Activated CD4-positive, alpha-beta memory T cell treated with anti-CD3 and anti-CD28 coated beads for 36 hours (primary cell): ENCODE measurements at regions of chr19 and their contacts with region 1.

Region 1: GRCh38 chr19:9140159-9140874 is at the start of gene ZNF317:
- DNase-seq: peak; percentile 93
- H3K4me3 Mint-ChIP-seq: peak within 1 kb of the TSS; percentile 98
- H3K27ac Mint-ChIP-seq: peak within 1 kb of the TSS; percentile 94
- H3K4me1 Mint-ChIP-seq: peaks cover 36% of the 10 kb centered on the region
- H3K27me3 Mint-ChIP-seq: no peaks in the 10 kb centered on the region
- total RNA-seq, gene ZNF317: 31.8 to 31.9 TPM

Region 2: GRCh38 chr19:8832132-8833021 is 307.9 kb before region 1 on chr19 and contains the starts of genes MBD3L1 and ZNF558:
- CTCF ChIA-PET with region 1: no interaction called
- POLR2A ChIA-PET with region 1: no interaction called
- intact Hi-C with region 1: loop called (anchors 2 kb)
- DNase-seq: peak; percentile 99
- H3K4me3 Mint-ChIP-seq: peak within 1 kb of the TSS; percentile 81
- H3K27ac Mint-ChIP-seq: peak within 1 kb of the TSS; percentile 94
- H3K4me1 Mint-ChIP-seq: peaks cover 22% of the 10 kb centered on the region
- H3K27me3 Mint-ChIP-seq: no peaks in the 10 kb centered on the region
- total RNA-seq, gene MBD3L1: not detected
- total RNA-seq, gene ZNF558: 27.3 to 30.3 TPM

Region 3: DNA sequence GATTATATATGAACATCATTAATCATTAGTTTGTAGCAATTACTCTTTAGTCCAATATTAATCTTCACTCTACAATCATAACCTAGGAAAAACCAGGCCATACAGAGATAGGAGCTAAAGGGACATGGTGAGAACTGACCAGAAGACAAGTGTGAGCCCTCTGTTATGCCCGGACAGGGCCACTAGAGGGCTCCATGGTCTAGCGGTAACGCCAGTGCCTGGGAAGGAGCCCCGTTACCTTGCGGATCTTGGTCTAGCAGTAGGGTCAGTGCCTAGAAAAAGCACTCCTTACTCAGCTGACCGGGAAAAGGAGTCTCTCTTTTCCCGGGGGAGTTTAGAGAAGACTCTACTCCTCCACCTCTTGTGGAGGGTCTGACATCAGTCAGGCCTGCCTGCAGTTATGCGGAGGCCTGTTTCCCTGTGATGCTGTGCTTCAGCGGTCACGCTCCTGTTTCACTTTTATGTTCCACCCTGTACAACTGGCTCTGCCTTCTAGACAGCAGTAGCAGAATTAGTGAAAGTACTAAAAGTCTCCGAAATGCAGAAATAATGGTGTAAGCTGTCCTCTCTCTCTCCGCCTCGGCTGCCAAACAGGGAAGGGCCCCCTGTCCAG is 65.3 kb after region 1 on chr19:
- CTCF ChIA-PET with region 1: no interaction called
- POLR2A ChIA-PET with region 1: no interaction called
- intact Hi-C with region 1: loop called (anchors 2 kb)
- DNase-seq: peak; percentile 76
- H3K4me3 Mint-ChIP-seq: peak overlapping the region; percentile 23
- H3K27ac Mint-ChIP-seq: no peak overlapping the region
- H3K4me1 Mint-ChIP-seq: peaks cover 2% of the 10 kb centered on the region
- H3K27me3 Mint-ChIP-seq: peaks cover 4% of the 10 kb centered on the region

Region 4: DNA sequence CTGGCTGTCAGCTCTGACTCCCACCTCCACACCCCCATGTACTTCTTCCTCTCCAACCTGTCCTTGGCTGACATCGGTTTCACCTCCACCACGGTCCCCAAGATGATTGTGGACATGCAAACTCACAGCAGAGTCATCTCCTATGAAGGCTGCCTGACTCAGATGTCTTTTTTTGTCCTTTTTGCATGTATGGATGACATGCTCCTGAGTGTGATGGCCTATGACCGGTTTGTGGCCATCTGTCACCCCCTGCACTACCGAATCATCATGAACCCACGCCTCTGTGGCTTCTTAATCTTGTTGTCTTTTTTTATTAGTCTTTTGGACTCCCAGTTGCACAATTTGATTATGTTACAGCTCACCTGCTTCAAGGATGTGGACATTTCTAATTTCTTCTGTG is 110.9 kb after region 1 on chr19:
- CTCF ChIA-PET with region 1: no interaction called
- POLR2A ChIA-PET with region 1: no interaction called
- intact Hi-C with region 1: no loop called
- DNase-seq: no peak
- H3K4me3 Mint-ChIP-seq: no peak overlapping the region
- H3K27ac Mint-ChIP-seq: no peak overlapping the region
- H3K4me1 Mint-ChIP-seq: no peaks in the 10 kb centered on the region
- H3K27me3 Mint-ChIP-seq: peaks cover 13% of the 10 kb centered on the region

Region 5: GRCh38 chr19:9323919-9324583 is 183.7 kb after region 1 on chr19 and contains the start of gene ZNF559:
- CTCF ChIA-PET with region 1: no interaction called
- POLR2A ChIA-PET with region 1: no interaction called
- intact Hi-C with region 1: loop called (anchors 5 kb)
- DNase-seq: peak; percentile 98
- H3K4me3 Mint-ChIP-seq: peak within 1 kb of the TSS; percentile 83
- H3K27ac Mint-ChIP-seq: peak within 1 kb of the TSS; percentile 92
- H3K4me1 Mint-ChIP-seq: peaks cover 24% of the 10 kb centered on the region
- H3K27me3 Mint-ChIP-seq: no peaks in the 10 kb centered on the region
- total RNA-seq, gene ZNF559: 8.0 to 9.4 TPM

Region 6: GRCh38 chr19:9435279-9436268 is 295.3 kb after region 1 on chr19 and contains the start of gene ZNF266:
- CTCF ChIA-PET with region 1: no interaction called
- POLR2A ChIA-PET with region 1: interaction called, 3 read pairs
- intact Hi-C with region 1: loop called (anchors 1 kb)
- DNase-seq: peak; percentile 96
- H3K4me3 Mint-ChIP-seq: peak within 1 kb of the TSS; percentile 94
- H3K27ac Mint-ChIP-seq: peak within 1 kb of the TSS; percentile 98
- H3K4me1 Mint-ChIP-seq: peaks cover 33% of the 10 kb centered on the region
- H3K27me3 Mint-ChIP-seq: no peaks in the 10 kb centered on the region
- total RNA-seq, gene ZNF266: 20.0 to 23.4 TPM